Activated naive CD4-positive, alpha-beta T cell treated with anti-CD3 and anti-CD28 coated beads for 36 hours (primary cell): ENCODE measurements at regions of chr4 and their contacts with region 1.

Region 1: GRCh38 chr4:174365018-174365587 is 81.4 kb downstream of the CEP44 start:
- DNase-seq: peak; percentile 12
- H3K4me3 Mint-ChIP-seq: no peak overlapping the region
- H3K27ac Mint-ChIP-seq: no peak overlapping the region
- H3K4me1 Mint-ChIP-seq: no peaks in the 10 kb centered on the region
- H3K27me3 Mint-ChIP-seq: peaks cover 11% of the 10 kb centered on the region

Region 2: GRCh38 chr4:174522183-174523048 is 157.3 kb after region 1 on chr4 and contains the start of gene HPGD:
- CTCF ChIA-PET with region 1: interaction called, 4 read pairs
- intact Hi-C with region 1: loop called (anchors 2 kb)
- DNase-seq: peak; percentile 73
- H3K4me3 Mint-ChIP-seq: peak within 1 kb of the TSS; percentile 73
- H3K27ac Mint-ChIP-seq: peak within 1 kb of the TSS; percentile 46
- H3K4me1 Mint-ChIP-seq: peaks cover 13% of the 10 kb centered on the region
- H3K27me3 Mint-ChIP-seq: peaks cover 36% of the 10 kb centered on the region
- total RNA-seq, gene HPGD: 1.5 to 2.8 TPM

Region 3: DNA sequence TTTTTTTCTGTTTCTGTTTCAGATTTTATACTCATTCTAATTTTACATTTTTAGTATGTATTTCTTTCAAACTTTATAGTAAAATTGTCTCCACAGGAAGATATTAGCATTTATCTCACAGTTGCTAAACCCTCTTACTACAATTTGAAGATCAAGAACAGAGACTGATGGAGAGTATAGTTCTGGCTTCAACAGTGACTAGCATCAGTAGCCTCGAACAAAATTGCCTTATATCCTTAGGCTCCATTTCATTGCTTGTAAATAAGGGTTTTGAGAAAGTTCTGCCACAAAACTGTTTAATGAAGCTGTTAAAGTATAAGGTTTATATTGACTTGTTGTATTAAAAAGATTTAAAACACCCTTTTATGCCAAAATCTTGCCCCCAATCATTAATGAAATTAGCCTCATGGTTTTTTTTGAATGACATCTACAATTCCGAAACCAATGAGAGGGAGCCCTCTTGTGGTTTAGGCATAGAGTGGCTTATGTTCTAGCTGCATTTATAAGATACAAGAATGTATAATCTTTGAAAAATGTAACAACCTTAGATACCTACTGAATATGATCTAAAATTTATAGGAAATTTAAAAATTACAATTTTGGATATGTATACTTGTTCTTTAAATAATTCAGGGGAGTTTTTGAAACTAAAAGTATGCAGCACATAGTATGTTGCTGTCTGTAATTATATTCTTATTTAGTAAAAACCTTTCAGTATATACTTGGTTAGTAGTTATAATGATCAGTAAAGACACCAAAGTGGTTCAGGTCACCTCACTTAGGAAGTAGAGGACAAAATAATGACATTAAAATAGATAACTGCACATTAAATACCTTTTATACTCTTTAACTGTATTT is 267.0 kb after region 1 on chr4:
- CTCF ChIA-PET with region 1: interaction called, 3 read pairs
- intact Hi-C with region 1: loop called (anchors 1 kb)
- DNase-seq: no peak
- H3K4me3 Mint-ChIP-seq: no peak overlapping the region
- H3K27ac Mint-ChIP-seq: no peak overlapping the region
- H3K4me1 Mint-ChIP-seq: no peaks in the 10 kb centered on the region
- H3K27me3 Mint-ChIP-seq: no peaks in the 10 kb centered on the region

Region 4: DNA sequence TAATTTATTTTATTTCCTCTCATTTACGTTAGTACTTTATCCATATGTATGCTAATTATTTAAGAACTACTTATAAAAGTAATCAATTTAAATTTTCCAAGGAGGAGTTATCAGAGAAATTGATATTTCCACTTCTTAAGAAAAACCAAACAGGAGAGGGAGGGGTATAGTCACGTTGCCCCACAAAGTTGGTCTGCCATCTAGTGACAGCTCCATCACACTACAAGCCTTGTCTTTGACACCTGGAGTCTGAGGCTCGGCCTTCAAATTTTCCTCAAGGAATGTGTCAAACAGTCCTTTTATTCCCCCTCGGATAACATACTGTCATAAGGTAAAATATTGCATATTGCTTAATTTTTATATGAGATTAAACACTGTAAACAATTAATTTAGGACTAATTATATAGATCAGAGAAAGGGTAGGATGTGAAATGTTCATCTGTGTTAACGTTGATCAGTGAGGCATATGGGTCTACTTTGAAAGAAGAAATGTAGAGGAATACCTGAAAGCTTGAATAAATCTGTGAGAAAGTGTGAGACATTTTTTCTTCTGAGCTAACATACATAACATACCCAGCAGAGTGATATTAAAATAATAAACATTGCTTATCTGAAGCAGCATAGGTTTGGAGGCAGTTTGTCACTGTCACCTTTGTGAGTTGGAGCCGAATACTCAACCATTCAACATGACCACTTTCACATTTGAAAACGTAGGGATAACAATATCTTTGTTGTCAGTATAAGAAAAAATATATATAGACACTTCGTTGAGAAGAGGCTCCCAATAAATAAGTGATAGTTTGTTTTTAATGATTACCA is 349.5 kb after region 1 on chr4:
- CTCF ChIA-PET with region 1: interaction called, 4 read pairs
- intact Hi-C with region 1: loop called (anchors 1 kb)
- DNase-seq: peak; percentile 31
- H3K4me3 Mint-ChIP-seq: no peak overlapping the region
- H3K27ac Mint-ChIP-seq: no peak overlapping the region
- H3K4me1 Mint-ChIP-seq: no peaks in the 10 kb centered on the region
- H3K27me3 Mint-ChIP-seq: peaks cover 7% of the 10 kb centered on the region

Region 5: GRCh38 chr4:175536852-175537453 is 1171.8 kb after region 1 on chr4:
- CTCF ChIA-PET with region 1: no interaction called
- intact Hi-C with region 1: loop called (anchors 2 kb)
- DNase-seq: no peak
- H3K4me3 Mint-ChIP-seq: no peak overlapping the region
- H3K27ac Mint-ChIP-seq: no peak overlapping the region
- H3K4me1 Mint-ChIP-seq: no peaks in the 10 kb centered on the region
- H3K27me3 Mint-ChIP-seq: no peaks in the 10 kb centered on the region